ENCODE measurements at regions of chr11 and their contacts with region 1.

Region 1: DNA sequence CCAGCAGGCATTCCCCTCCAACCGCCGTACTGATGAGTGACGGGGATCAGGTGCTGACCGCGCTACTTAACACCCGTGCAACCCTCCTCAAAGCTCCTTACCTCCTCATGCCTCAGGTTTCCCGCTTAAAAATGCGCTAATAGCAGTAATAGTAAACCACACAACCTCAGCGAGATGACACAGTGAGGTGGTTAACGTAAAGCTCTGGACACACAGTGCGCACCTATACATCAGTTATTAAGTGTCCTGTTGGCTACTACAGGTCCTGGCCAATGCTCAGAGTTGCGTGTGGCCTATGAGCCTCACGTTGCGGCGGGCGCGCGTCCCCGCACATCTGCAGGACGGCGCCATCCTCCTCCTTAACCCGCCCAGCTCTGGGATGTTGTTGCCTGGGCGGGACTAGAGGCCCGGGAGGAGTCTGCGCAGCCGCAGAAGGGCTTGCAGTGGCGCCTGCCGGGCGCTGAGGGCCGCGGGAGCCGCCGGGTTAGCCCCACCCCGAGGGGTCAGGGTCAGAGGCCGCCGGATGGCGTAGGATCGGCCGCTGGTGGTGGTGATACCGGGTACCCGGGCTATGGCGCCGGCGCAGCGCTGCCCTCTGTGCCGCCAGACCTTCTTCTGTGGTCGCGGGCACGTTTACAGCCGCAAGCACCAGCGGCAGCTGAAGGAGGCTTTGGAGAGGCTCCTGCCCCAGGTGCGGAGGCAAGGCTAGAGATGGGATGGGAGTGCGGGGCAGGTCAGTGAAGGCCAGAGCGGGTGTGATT is at the start of gene CENATAC:
- DNase-seq: peak; percentile 94 to 96 (median 95)
- H3K4me3 ChIP-seq: peak within 1 kb of the TSS; percentile 87 to 99
- H3K4me3 Mint-ChIP-seq: peak within 1 kb of the TSS; percentile 87 to 99 (median 98)
- H3K27ac ChIP-seq: peak within 1 kb of the TSS; percentile 75
- H3K27ac Mint-ChIP-seq: peak within 1 kb of the TSS; percentile 90 to 99 (median 95)
- H3K4me1 ChIP-seq: peaks cover 24% of the 10 kb centered on the region
- H3K4me1 Mint-ChIP-seq: peaks cover 18 to 52% (median 34%) of the 10 kb centered on the region in 4 donors
- H3K27me3 ChIP-seq: no peaks in the 10 kb centered on the region
- H3K27me3 Mint-ChIP-seq: no peaks in the 10 kb centered on the region
- total RNA-seq, gene CENATAC: 109 to 114 TPM

Region 2: DNA sequence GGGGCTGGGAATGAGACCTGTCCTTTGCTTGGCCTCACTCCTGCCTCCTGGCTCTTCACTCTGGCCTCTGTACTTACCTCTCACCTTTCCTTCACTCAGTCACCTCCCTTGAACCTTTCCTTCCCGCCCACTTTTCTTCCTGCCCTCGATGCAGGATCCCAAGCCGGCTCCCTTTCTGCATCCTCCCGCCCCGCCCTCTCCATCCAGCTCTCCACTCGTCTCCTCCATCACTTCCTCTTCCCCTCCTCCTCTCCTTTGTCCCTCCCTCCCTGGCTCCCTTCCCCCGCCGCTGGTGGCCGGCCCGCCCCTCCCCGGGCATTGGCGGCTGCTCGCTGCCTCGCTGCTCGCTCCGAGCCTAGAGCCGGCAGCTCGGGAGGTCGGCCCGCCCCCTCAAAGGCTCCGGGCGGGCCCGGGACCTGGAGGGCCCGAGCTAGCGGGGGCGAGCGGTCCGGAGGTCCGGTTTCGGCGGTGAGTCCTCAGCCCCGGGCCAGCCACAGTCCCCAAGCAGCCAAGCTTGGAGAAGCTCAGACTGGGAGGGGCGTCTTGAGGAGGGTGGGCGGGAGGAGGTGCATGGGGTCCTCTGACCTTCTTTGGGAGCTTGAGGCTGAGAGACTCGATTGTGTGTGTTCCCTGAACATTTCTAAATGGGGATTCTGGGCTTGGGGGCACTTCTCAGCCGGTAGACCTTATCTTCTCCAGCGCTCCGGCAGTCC is 376.6 kb before region 1 on chr11:
- CTCF ChIA-PET with region 1: no interaction called
- POLR2A ChIA-PET with region 1: no interaction called
- intact Hi-C with region 1: no loop called
- DNase-seq: no peak
- H3K4me3 ChIP-seq: no peak overlapping the region
- H3K4me3 Mint-ChIP-seq: peak overlapping the region; percentile 14 to 78 (median 68)
- H3K27ac ChIP-seq: no peak overlapping the region
- H3K27ac Mint-ChIP-seq: peak overlapping the region in 3 of 7 donors; percentile 32 to 73 (median 47)
- H3K4me1 ChIP-seq: peaks cover 13% of the 10 kb centered on the region
- H3K4me1 Mint-ChIP-seq: peaks cover 5 to 16% (median 6%) of the 10 kb centered on the region in 4 donors
- H3K27me3 ChIP-seq: peaks cover 6% of the 10 kb centered on the region
- H3K27me3 Mint-ChIP-seq: peaks cover 9 to 11% of the 10 kb centered on the region in 2 donors

Region 3: GRCh38 chr11:118895142-118896039 is 102.4 kb before region 1 on chr11:
- CTCF ChIA-PET with region 1: no interaction called
- POLR2A ChIA-PET with region 1: no interaction called
- intact Hi-C with region 1: no loop called
- DNase-seq: peak; percentile 80 to 91 (median 82)
- H3K4me3 ChIP-seq: peak overlapping the region; percentile 17 to 37
- H3K4me3 Mint-ChIP-seq: peak overlapping the region; percentile 68 to 87 (median 76)
- H3K27ac ChIP-seq: peak overlapping the region; percentile 84
- H3K27ac Mint-ChIP-seq: peak overlapping the region; percentile 93 to 98 (median 97)
- H3K4me1 ChIP-seq: peaks cover 83% of the 10 kb centered on the region
- H3K4me1 Mint-ChIP-seq: peaks cover 58 to 82% (median 70%) of the 10 kb centered on the region in 4 donors
- H3K27me3 ChIP-seq: no peaks in the 10 kb centered on the region
- H3K27me3 Mint-ChIP-seq: no peaks in the 10 kb centered on the region

Region 4: GRCh38 chr11:118939953-118940598 is 57.7 kb before region 1 on chr11:
- CTCF ChIA-PET with region 1: interaction called, 3 read pairs
- POLR2A ChIA-PET with region 1: interaction called, 3 read pairs
- intact Hi-C with region 1: loop called (anchors 5 kb)
- DNase-seq: peak in 4 of 5 donors; percentile 37 to 71 (median 44)
- H3K4me3 ChIP-seq: peak overlapping the region in 1 of 2 donors; percentile 6
- H3K4me3 Mint-ChIP-seq: peak overlapping the region in 6 of 8 donors; percentile 9 to 62 (median 53)
- H3K27ac ChIP-seq: peak overlapping the region; percentile 6
- H3K27ac Mint-ChIP-seq: peak overlapping the region in 3 of 7 donors; percentile 43 to 53 (median 52)
- H3K4me1 ChIP-seq: peaks cover 18% of the 10 kb centered on the region
- H3K4me1 Mint-ChIP-seq: peaks cover 22 to 47% (median 32%) of the 10 kb centered on the region in 4 donors
- H3K27me3 ChIP-seq: no peaks in the 10 kb centered on the region
- H3K27me3 Mint-ChIP-seq: peaks cover 0 to 1% of the 10 kb centered on the region in 2 donors

Region 5: DNA sequence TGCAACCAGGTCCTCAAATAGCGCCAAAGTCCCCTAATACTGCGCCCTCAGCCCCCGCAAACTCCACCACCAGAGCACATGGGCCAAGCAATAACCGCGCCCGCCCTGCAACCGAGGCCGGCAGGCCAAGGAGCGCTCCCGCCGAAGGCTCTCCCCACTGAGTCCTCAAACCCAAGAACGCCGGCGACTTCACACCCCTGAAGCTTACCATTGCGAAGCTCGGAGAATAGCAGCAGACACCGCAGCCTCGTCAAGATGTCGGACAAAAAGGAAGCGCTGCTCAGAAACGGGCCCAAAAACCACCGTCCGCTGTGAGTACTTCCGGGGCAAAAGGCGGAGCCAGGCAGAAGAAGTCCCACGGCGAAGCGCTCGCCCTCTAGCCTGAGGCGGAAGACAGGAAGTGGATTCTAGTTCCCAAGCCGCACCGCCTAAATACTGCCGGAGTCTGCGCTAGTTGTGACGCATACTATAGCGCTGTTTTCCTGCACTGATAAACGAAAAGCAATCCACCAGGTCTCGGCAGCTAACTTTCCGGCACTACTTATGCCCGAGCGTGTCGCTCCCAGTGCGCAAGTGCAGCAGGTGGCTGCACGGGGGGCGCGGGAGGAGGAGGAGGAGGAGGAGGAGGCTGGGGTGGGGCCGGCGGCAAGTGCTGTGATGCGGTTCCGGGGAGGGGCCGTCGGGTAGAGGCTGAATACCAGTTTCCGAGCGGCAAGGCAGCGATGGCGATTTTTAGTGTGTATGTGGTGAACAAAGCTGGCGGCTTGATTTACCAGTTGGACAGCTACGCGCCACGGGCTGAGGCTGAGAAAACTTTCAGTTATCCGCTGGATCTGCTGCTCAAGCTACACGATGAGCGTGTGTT is 20.5 kb after region 1 on chr11 and contains the starts of genes RPS25 and TRAPPC4:
- CTCF ChIA-PET with region 1: interaction called, 7 read pairs
- POLR2A ChIA-PET with region 1: interaction called, 170 read pairs
- intact Hi-C with region 1: loop called (anchors 1 kb)
- DNase-seq: peak; percentile 96 to 98 (median 97)
- H3K4me3 ChIP-seq: peak within 1 kb of the TSS; percentile 71 to 96
- H3K4me3 Mint-ChIP-seq: peak within 1 kb of the TSS; percentile 94 to 100 (median 99)
- H3K27ac ChIP-seq: peak within 1 kb of the TSS; percentile 87
- H3K27ac Mint-ChIP-seq: peak within 1 kb of the TSS; percentile 98 to 100 (median 100)
- H3K4me1 ChIP-seq: peaks cover 52% of the 10 kb centered on the region
- H3K4me1 Mint-ChIP-seq: peaks cover 21 to 73% (median 51%) of the 10 kb centered on the region in 4 donors
- H3K27me3 ChIP-seq: no peaks in the 10 kb centered on the region
- H3K27me3 Mint-ChIP-seq: no peaks in the 10 kb centered on the region
- total RNA-seq, gene RPS25: 2,545 to 2,705 TPM
- total RNA-seq, gene TRAPPC4: 89.2 to 97.3 TPM

Region 6: GRCh38 chr11:119030329-119031049 is 32.7 kb after region 1 on chr11 and contains the start of gene SLC37A4:
- CTCF ChIA-PET with region 1: interaction called, 5 read pairs
- POLR2A ChIA-PET with region 1: interaction called, 24 read pairs
- intact Hi-C with region 1: loop called (anchors 1 kb)
- DNase-seq: peak; percentile 98 to 99 (median 99)
- H3K4me3 ChIP-seq: peak within 1 kb of the TSS; percentile 61 to 91
- H3K4me3 Mint-ChIP-seq: peak within 1 kb of the TSS; percentile 78 to 91 (median 82)
- H3K27ac ChIP-seq: peak within 1 kb of the TSS; percentile 76
- H3K27ac Mint-ChIP-seq: peak within 1 kb of the TSS; percentile 64 to 95 (median 93)
- H3K4me1 ChIP-seq: peaks cover 19% of the 10 kb centered on the region
- H3K4me1 Mint-ChIP-seq: peaks cover 14 to 40% (median 19%) of the 10 kb centered on the region in 4 donors
- H3K27me3 ChIP-seq: no peaks in the 10 kb centered on the region
- H3K27me3 Mint-ChIP-seq: no peaks in the 10 kb centered on the region
- total RNA-seq, gene SLC37A4: 14.6 to 14.8 TPM